Activated naive CD4-positive, alpha-beta T cell treated with anti-CD3 and anti-CD28 coated beads, Interleukin-2, amount 10 ng/mL, durations not matched to agents 7 days and 5 days (primary cell): ENCODE measurements at regions of chr1 and their contacts with region 1.

Region 1: GRCh38 chr1:40774266-40774998 is 9.2 kb upstream of the KCNQ4 start:
- DNase-seq: peak; percentile 77
- H3K4me3 Mint-ChIP-seq: no peak overlapping the region
- H3K27ac Mint-ChIP-seq: no peak overlapping the region
- H3K4me1 Mint-ChIP-seq: peaks cover 20% of the 10 kb centered on the region
- H3K27me3 Mint-ChIP-seq: no peaks in the 10 kb centered on the region

Region 2: GRCh38 chr1:40745176-40745575 is 29.3 kb before region 1 on chr1:
- CTCF ChIA-PET with region 1: no interaction called
- DNase-seq: no peak
- H3K4me3 Mint-ChIP-seq: no peak overlapping the region
- H3K27ac Mint-ChIP-seq: no peak overlapping the region
- H3K4me1 Mint-ChIP-seq: peaks cover 27% of the 10 kb centered on the region
- H3K27me3 Mint-ChIP-seq: no peaks in the 10 kb centered on the region

Region 3: DNA sequence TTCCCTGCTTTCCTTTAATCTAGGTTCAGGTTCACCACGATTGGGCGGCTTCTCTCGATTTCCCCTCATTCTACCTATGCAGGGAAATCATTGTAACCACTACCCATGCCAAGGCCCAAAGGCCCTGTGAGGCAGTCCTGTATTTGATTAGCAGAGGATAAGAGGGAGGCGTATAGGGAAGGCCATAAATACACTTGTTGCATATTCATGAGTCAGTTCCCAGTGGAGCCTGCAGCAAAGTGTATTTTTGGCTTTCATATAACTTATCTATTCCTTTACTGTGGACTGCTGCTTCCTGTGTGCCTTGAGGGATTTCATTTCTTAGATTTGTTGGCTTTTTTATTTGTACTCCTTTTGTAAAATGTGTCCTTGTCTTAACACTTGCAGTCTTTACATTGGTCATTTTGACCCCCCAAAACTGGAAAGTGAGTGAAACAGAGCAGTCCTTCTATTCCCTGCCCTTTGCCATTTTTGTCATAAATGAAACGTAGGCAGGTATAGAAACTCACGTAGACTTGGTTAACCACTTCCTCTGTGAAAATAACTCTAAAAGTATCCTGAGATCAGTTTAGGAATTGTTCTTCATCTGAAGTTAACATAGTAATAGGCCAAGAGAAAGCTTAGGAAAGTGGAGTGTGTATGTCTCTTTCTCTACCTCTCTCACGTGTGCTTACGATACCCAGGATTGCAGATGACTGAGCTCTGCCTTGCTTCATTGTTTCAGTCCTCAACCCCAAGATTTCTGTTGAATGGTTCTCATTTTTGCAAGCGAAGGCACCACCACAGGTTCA is 10.5 kb before region 1 on chr1:
- CTCF ChIA-PET with region 1: interaction called, 59 read pairs
- DNase-seq: no peak
- H3K4me3 Mint-ChIP-seq: peak overlapping the region; percentile 55
- H3K27ac Mint-ChIP-seq: peak overlapping the region; percentile 95
- H3K4me1 Mint-ChIP-seq: peaks cover 45% of the 10 kb centered on the region
- H3K27me3 Mint-ChIP-seq: no peaks in the 10 kb centered on the region

Region 4: GRCh38 chr1:40799351-40799867 is 25.0 kb after region 1 on chr1:
- CTCF ChIA-PET with region 1: interaction called, 27 read pairs
- DNase-seq: no peak
- H3K4me3 Mint-ChIP-seq: no peak overlapping the region
- H3K27ac Mint-ChIP-seq: no peak overlapping the region
- H3K4me1 Mint-ChIP-seq: peaks cover 62% of the 10 kb centered on the region
- H3K27me3 Mint-ChIP-seq: peaks cover 27% of the 10 kb centered on the region

Region 5: GRCh38 chr1:40840526-40841323 is 66.3 kb after region 1 on chr1:
- CTCF ChIA-PET with region 1: interaction called, 23 read pairs
- DNase-seq: peak; percentile 66
- H3K4me3 Mint-ChIP-seq: peak overlapping the region; percentile 16
- H3K27ac Mint-ChIP-seq: peak overlapping the region; percentile 84
- H3K4me1 Mint-ChIP-seq: peaks cover 41% of the 10 kb centered on the region
- H3K27me3 Mint-ChIP-seq: peaks cover 4% of the 10 kb centered on the region

Region 6: GRCh38 chr1:40855513-40855912 is 81.1 kb after region 1 on chr1:
- CTCF ChIA-PET with region 1: interaction called, 139 read pairs
- DNase-seq: no peak
- H3K4me3 Mint-ChIP-seq: no peak overlapping the region
- H3K27ac Mint-ChIP-seq: no peak overlapping the region
- H3K4me1 Mint-ChIP-seq: peaks cover 2% of the 10 kb centered on the region
- H3K27me3 Mint-ChIP-seq: peaks cover 58% of the 10 kb centered on the region